GM10248 (cell line): ENCODE measurements at regions of chr12 and their contacts with region 1.

Region 1: GRCh38 chr12:75545636-75546035 is 34.2 kb upstream of the KRR1 start:
- DNase-seq: no peak
- CTCF ChIP-seq: no peak

Region 2: GRCh38 chr12:75489613-75490210 is 55.9 kb before region 1 on chr12:
- CTCF ChIA-PET with region 1: no interaction called
- POLR2A ChIA-PET with region 1: no interaction called
- DNase-seq: no peak
- CTCF ChIP-seq: no peak

Region 3: DNA sequence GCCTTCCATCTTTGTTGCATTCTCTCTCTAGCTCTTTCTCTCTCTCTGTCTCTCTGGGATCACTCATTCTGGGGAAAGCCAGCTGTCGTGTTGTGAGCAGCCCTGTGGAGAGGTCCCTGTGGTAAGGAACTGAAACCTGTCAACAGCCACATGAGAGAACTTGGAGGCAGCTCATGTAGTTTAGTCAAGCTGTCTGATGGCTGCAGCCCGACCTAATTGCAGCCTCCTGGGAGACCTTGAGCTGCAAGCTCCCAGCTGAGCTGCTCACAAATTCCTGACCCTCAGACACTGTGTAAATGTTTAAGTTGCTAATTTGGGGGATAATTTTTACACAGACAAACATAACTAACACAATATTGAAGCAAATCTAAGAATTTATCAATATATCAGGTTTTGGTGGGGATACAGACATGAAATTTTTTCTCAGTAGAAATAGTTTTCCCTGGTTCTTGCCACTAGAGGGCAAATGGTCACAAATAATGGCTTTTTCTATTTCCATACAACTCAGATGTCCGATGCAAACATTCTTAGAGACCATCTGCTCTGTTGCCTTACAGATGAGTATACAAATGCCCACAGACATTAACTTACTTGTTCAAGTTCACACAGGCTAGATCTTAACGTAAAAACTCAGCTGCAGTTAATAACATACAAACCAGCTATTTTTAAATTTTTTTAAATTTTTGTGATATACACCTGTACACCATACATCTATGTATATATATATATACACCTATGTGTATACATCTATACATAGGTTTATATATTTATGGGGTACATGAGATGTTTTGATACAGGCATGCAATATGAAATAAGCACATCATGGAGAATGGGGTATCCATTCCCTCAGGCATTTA is 18.8 kb before region 1 on chr12:
- CTCF ChIA-PET with region 1: interaction called, 11 read pairs
- POLR2A ChIA-PET with region 1: no interaction called
- DNase-seq: peak; percentile 45
- CTCF ChIP-seq: peak; percentile 43